Activated CD4-positive, alpha-beta T cell treated with anti-CD3 and anti-CD28 coated beads for 36 hours (primary cell): ENCODE measurements at regions of chr16 and their contacts with region 1.

Region 1: DNA sequence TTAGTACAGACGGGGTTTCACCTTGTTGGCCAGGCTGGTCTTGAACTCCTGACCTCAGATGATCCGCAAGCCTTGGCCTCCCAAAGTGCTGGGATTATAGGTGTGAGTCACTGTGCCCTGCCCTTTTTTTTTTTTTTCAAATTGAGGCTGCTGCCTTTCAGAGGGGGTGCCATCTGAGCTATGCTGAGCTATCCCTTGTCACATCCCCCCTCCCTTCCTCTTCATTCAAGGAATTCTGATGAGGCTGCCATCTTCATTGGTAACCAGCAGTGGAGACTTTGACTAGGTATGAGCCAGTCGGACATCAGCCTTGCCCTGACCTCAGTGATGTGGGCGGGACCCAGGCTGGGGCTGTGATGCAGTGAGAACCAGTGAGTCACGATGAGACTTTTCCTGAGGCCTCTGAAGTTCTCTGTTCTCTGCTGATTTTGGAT is 24.4 kb upstream of the GPT2 start:
- DNase-seq: peak; percentile 74
- ATAC-seq: peak; percentile 83
- H3K4me3 Mint-ChIP-seq: no peak overlapping the region
- H3K27ac Mint-ChIP-seq: no peak overlapping the region
- H3K4me1 Mint-ChIP-seq: peaks cover 27% of the 10 kb centered on the region
- H3K27me3 Mint-ChIP-seq: no peaks in the 10 kb centered on the region

Region 2: GRCh38 chr16:46843898-46844642 is 15.7 kb before region 1 on chr16:
- CTCF ChIA-PET with region 1: interaction called, 11 read pairs
- POLR2A ChIA-PET with region 1: interaction called, 11 read pairs
- intact Hi-C with region 1: no loop called
- DNase-seq: no peak
- ATAC-seq: no peak
- H3K4me3 Mint-ChIP-seq: no peak overlapping the region
- H3K27ac Mint-ChIP-seq: no peak overlapping the region
- H3K4me1 Mint-ChIP-seq: no peaks in the 10 kb centered on the region
- H3K27me3 Mint-ChIP-seq: peaks cover 4% of the 10 kb centered on the region